ENCODE measurements at regions of chr13 and their contacts with region 1.

Region 1: GRCh38 chr13:50801087-50801931 is 42.2 kb downstream of the DLEU7 start:
- DNase-seq: peak in 2 of 3 donors; percentile 37 to 52
- ATAC-seq: peak; percentile 88 to 91
- H3K4me3 ChIP-seq: no peak overlapping the region
- H3K27ac ChIP-seq: no peak overlapping the region
- H3K4me1 ChIP-seq: peaks cover 10% of the 10 kb centered on the region
- H3K27me3 ChIP-seq: no peaks in the 10 kb centered on the region

Region 2: DNA sequence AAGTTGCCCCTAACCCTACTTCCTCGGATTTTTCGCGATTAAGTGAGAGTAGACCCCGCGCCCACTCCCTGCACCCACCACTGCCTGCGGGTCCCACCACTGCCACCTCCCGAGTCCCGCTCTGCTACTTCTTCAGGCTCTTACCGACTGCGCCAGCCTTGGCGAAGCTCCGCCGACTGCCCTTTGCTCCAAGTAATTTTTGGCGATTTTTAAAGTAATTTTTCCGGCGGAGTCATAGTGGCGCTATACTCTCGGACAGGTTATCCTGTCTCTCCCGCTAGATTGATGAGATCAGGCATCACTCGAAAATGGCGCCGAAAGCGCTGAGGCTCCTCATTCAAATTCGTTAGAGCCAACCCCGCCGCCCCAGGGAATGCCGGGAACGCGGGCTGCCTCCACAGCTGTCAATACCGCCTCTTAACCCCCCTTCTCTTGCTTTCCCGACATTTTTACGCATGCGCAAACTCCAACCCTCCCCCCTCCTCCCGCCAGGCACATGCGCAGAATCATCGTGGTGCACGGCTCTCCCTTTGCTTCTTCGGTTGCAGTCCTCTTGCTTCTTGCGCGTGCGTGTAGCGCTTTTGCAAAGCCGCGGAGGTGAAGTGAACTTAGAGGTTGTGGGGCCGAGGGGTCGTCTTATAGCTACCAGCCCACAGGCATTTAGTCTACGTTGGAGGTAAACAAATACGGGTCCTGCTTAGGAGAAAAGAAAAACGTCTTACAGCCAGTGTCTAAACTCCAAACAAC is 719.5 kb before region 1 on chr13:
- intact Hi-C with region 1: loop called in 1 of 4 experiments (anchors 5 kb)
- DNase-seq: peak; percentile 97 to 98 (median 98)
- ATAC-seq: peak; percentile 97
- H3K4me3 ChIP-seq: peak overlapping the region; percentile 89
- H3K27ac ChIP-seq: peak overlapping the region; percentile 54
- H3K4me1 ChIP-seq: no peaks in the 10 kb centered on the region
- H3K27me3 ChIP-seq: no peaks in the 10 kb centered on the region

Region 3: DNA sequence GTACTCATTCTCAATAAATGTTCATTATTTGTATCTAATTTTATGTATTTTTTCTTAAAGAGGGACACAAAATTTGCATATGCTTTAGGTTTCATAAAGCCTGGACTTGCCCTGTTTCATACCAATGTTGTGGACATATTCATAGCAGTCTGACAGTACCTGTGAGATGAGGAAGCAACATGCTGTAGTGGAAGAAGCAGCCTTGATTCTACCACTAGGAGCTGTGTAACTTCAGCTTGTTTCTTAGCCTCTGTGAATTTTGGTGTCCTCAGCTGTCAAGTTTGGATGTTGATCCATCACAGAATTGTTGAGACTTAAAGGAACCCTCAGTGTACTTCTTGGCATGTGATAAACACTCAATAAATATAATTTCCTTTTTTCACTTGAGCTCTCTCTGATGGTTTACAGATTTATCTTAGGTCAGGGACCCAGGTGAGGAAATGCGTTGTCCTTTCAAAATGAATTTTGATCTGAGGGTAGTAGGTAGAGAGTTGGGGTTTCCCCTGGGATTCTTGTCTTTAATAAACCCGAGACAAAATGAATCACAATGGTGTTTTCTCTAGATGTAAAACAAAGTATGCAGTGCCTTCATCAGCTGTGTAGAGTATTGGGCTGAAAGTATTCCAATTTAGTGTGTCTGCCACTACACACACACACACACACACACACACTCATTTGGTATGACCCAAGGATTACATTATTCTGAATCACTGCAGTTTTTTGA is 633.9 kb before region 1 on chr13:
- intact Hi-C with region 1: loop called in 1 of 4 experiments (anchors 5 kb)
- DNase-seq: no peak
- ATAC-seq: no peak
- H3K4me3 ChIP-seq: no peak overlapping the region
- H3K27ac ChIP-seq: no peak overlapping the region
- H3K4me1 ChIP-seq: no peaks in the 10 kb centered on the region
- H3K27me3 ChIP-seq: no peaks in the 10 kb centered on the region

Region 4: GRCh38 chr13:50685491-50685890 is 115.8 kb before region 1 on chr13:
- intact Hi-C with region 1: loop called in 1 of 4 experiments (anchors 10 kb)
- DNase-seq: peak; percentile 84 to 94 (median 92)
- ATAC-seq: peak; percentile 65 to 85
- H3K4me3 ChIP-seq: peak overlapping the region; percentile 42
- H3K27ac ChIP-seq: peak overlapping the region; percentile 12
- H3K4me1 ChIP-seq: peaks cover 6% of the 10 kb centered on the region
- H3K27me3 ChIP-seq: no peaks in the 10 kb centered on the region

Region 5: GRCh38 chr13:51923983-51924539 is 1122.8 kb after region 1 on chr13:
- intact Hi-C with region 1: no loop called
- DNase-seq: no peak
- ATAC-seq: no peak
- H3K4me3 ChIP-seq: no peak overlapping the region
- H3K27ac ChIP-seq: no peak overlapping the region
- H3K4me1 ChIP-seq: no peaks in the 10 kb centered on the region
- H3K27me3 ChIP-seq: no peaks in the 10 kb centered on the region

Measured in right cardiac atrium (tissue), 5 donors.